BJ (cell line): ENCODE measurements at regions of chr11 and their contacts with region 1.

Region 1: DNA sequence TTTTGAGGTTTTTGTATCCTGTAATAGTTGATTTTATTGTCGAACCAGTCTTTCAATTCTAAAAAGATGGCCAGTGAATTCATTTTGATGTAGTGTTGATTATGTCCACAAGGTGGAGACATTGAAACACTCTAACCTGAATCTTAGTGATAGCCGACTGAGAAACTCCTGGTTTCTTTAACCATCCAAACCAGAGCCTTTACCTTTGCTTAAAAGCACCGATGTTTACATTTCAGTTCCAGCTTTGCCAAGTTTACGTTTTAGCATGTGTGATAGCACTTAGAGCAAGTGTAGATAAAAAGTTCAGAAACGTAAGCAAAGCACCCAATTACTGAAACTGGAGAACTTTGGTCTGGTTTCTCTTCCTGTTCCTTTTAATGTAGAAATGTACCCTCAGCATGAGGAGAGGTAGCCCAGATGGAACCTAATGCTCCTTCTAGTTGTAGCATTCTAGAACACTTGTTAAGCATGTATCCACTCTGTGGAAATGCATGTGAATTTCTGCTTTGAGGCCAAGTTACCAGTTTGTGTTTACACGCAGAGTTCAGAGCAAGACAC is 208.6 kb downstream of the DBX1 start:
- DNase-seq: no peak
- H3K4me3 ChIP-seq: no peak overlapping the region
- H3K27me3 ChIP-seq: no peaks in the 10 kb centered on the region
- CTCF ChIP-seq: peak; percentile 56

Region 2: GRCh38 chr11:19658344-19658743 is 293.3 kb before region 1 on chr11:
- CTCF ChIA-PET with region 1: no interaction called
- POLR2A ChIA-PET with region 1: no interaction called
- DNase-seq: no peak
- H3K4me3 ChIP-seq: no peak overlapping the region
- H3K27me3 ChIP-seq: 0 out of 2 replicates have a peak, but pooled peaks cover 1% of the 10 kb centered on the region
- CTCF ChIP-seq: 0 out of 2 replicates have a peak, but pooled peaks have one; percentile 8

Region 3: DNA sequence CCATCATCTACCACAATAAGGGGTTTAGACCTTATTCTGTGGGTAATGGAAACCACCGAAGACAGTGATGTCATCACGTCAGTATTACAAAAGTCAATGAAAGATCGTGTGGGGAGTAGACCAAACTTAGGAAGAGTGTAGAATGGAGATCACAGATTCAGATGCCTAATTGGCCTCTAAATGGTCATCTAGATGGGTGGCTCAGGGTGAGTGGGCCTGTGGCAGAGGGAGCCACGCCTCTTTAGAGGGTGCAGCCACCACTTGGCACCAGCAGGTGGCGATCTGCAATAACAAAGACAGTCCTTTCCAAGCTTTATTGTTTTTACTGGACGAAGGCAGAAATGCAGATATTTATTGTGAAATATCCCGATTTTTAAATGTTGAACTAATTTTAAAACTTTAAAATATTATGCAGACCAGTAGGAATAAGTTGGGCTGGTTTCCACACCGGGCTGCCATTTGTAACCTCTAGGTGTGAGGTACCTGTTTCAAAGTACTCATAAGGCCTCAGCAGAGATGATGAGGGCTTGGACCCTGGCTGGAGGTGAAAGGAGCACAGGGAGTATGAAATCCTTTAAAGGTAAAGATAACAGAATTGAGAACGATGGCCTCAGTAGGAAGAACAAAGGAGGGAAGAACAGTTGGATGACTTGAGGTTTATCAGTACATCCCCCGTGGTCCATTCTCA is 13.3 kb before region 1 on chr11:
- CTCF ChIA-PET with region 1: interaction called, 19 read pairs
- POLR2A ChIA-PET with region 1: no interaction called
- DNase-seq: no peak
- H3K4me3 ChIP-seq: no peak overlapping the region
- H3K27me3 ChIP-seq: no peaks in the 10 kb centered on the region
- CTCF ChIP-seq: peak; percentile 77

Region 4: DNA sequence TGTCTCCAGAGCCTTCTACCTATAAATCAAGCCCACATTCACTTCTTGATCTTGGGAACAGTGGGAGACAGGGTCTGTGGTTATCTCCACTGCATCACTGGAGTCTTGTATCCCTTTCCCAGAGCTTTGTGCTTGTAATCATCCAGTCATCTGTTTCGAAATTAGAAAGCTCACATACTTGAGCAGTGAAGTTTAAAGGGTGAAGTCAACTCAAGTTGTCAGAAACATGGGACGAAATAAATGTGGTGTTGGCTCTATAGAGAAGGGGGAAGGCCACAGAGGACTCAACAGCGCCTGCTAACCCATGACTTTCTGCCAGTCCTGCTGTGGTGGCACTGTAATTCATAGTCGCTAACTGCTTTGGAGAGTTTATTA is 11.2 kb after region 1 on chr11:
- CTCF ChIA-PET with region 1: interaction called, 11 read pairs
- POLR2A ChIA-PET with region 1: interaction called, 3 read pairs
- DNase-seq: peak; percentile 60
- H3K4me3 ChIP-seq: no peak overlapping the region
- H3K27me3 ChIP-seq: no peaks in the 10 kb centered on the region
- CTCF ChIP-seq: no peak

Region 5: GRCh38 chr11:19978668-19979518 is 27.3 kb after region 1 on chr11:
- CTCF ChIA-PET with region 1: interaction called, 10 read pairs
- POLR2A ChIA-PET with region 1: no interaction called
- DNase-seq: no peak
- H3K4me3 ChIP-seq: no peak overlapping the region
- H3K27me3 ChIP-seq: no peaks in the 10 kb centered on the region
- CTCF ChIP-seq: no peak